Posterior cingulate gyrus (tissue), 11 donors: ENCODE measurements at regions of chr2 and their contacts with region 1.

Region 1: DNA sequence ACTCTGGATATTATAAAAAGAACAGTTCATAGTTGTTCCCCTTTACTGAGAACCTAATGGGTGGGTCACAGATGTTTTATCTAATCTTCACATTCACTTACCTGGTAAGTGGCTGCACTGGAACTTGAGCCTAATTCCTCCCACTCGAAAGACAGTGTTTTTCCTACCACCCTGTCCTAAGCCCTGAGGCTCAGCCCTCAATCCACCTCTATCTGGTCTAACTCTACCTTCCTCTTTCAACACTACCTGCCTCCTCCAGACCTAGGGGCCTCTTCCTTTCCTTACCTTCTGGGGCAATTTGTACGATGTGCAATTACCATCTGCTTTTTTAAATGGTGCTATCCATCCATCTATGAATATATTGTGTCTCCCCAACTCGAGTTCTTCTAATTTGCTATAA is 9.7 kb upstream of the KIF3C start:
- DNase-seq: no peak

Region 2: DNA sequence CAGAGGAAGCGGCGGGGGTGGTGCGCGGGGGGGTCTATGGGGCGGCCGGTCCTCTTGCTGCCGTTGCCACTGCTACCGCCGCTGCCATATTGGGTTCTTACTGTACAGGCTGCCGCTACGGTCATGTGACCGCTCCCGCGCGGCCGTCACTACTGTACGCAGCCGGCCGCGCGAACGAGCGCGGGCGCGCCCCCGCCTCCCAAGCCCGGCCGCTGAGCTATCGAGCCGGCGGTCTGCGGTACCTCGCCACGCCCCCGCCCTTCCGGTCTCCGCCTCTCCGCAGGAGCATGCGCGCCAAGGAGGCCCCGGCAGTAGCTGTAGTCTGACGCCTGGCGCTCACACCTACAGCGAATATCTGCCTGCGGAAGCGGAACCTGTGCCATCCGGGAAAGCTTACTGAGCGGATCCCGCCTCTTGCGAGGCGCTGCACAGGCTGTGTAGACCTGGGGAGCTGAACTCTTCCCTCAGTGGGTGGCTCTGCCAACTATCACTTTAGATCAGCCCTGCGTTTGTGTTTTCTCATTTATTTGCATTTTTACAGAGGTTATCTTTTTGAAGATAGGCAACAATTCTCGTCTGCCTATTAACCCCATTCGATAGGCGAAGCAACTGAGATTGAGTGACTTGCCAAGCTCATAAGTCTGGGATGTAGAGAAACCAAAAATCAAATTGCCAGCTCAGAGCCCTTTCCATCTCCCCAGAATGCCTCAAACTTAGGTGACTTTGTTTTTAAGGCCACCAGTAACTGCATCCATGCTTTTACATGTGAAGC is 113.4 kb before region 1 on chr2 and contains the start of gene ASXL2:
- intact Hi-C with region 1: no loop called
- DNase-seq: peak; percentile 96 to 100 (median 97)

Region 3: DNA sequence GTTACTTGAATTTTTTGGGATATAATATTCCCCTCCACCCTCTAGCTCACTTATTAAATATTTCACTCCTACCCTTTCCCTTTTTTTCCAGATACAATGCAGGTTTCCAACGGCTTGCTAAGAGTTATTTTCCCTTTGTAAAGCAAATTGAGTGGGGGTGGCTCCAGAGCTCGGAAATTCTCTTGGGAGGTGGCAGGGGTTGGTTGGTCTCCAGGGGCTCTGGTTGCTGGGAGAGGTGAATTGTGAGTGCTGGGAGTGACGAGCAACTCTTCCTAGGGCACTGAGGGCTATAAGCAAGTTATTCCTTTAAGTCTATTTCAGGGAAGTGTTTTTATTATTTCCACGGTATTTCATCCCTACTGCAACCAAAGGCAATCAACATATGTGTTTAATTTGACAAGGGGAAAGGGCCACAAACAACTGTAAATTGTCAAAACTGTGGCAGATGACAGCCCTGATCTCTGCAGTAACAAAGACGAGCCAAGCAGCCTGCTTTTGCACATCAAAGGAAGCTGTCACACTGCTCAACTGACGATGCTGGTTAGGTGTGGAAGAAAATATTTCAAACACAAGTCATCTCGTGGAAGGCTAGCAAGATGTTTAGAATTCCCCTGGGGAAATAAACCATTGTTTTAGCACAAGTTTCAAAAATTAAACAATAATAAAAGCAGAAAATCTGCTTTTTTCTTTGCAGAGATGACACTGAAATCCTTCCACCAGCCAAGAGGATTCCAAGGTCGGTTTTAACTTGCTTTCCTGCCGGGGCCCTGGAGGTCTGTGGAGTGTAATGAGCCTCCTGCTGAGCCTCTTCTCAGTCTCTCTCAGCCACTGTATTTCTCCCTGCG is 78.9 kb before region 1 on chr2:
- intact Hi-C with region 1: no loop called
- DNase-seq: peak in 1 of 10 donors; percentile 39

Region 4: GRCh38 chr2:26043862-26044696 is 52.1 kb after region 1 on chr2:
- intact Hi-C with region 1: no loop called
- DNase-seq: no peak

Region 5: DNA sequence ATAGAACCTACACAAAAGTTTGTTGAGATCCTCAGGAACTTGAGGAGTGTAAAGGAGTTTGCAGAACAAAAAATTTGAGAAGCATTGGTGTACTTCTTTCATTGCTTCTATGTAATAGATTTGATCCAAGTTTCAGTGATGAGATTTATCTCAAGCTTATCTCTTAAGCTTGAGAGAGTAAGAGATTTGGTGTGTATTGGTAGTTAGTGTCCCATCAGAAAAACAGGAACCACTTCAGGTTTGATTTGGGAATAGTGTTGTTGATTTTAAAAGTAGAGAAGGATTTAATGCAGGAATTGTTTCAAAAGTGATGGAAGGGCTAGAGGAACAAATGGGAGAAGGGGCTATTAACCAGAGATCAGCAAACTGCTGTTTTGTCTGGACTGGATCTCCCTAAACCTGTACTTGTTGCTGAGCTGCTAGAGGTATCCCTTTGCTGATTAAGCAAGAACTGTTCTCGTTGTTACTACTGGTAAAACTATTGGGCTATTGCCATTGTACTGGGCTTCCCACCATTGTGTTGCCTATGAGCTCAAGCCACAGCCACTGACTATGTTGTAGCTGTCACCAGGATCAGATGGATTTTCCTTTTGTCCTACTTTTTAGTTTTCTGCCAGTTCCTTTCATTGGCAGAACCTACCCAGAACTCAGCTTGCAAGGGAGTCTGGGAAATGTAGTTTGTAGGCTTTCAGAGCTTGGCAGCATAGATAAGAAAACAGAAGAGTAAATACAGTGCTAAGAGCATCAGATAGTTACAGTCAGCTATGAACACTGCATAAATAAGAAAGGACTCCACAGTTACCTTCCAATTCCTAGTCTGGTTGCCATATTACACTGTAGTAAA is 81.2 kb after region 1 on chr2:
- intact Hi-C with region 1: loop called (anchors 10 kb)
- DNase-seq: no peak

Region 6: GRCh38 chr2:26591619-26592505 is 599.9 kb after region 1 on chr2:
- intact Hi-C with region 1: no loop called
- DNase-seq: peak in 1 of 10 donors; percentile 30